GM12878 (cell line): ENCODE measurements at regions of chr6 and their contacts with region 1.

Region 1: GRCh38 chr6:132483779-132484679 is 28.9 kb downstream of the STX7 start:
- DNase-seq: peak; percentile 37
- ATAC-seq: peak; percentile 93
- H3K4me3 ChIP-seq: no peak overlapping the region
- H3K27ac ChIP-seq: no peak overlapping the region
- H3K4me1 ChIP-seq: peaks cover 31% of the 10 kb centered on the region
- H3K27me3 ChIP-seq: no peaks in the 10 kb centered on the region
- CTCF ChIP-seq: peak; percentile 47 to 74 (median 60); a peak in 5 of 6 replicates
- EP300 ChIP-seq: no peak
- POLR2A ChIP-seq: no peak
- RAD21 ChIP-seq: peak; percentile 92

Region 2: GRCh38 chr6:131909408-131910218 is 574.4 kb before region 1 on chr6:
- CTCF ChIA-PET with region 1: no interaction called
- POLR2A ChIA-PET with region 1: no interaction called
- RAD21 ChIA-PET with region 1: no interaction called
- SMC1A ChIA-PET with region 1: no interaction called
- in situ Hi-C with region 1: no loop called
- intact Hi-C with region 1: loop called (anchors 10 kb)
- DNase-seq: no peak
- ATAC-seq: peak; percentile 94
- H3K4me3 ChIP-seq: no peak overlapping the region
- H3K27ac ChIP-seq: no peak overlapping the region
- H3K4me1 ChIP-seq: no peaks in the 10 kb centered on the region
- H3K27me3 ChIP-seq: no peaks in the 10 kb centered on the region
- CTCF ChIP-seq: peak; percentile 75 to 80 (median 77)
- EP300 ChIP-seq: no peak
- POLR2A ChIP-seq: no peak
- RAD21 ChIP-seq: peak; percentile 65

Region 3: GRCh38 chr6:132270726-132271402 is 213.2 kb before region 1 on chr6:
- CTCF ChIA-PET with region 1: interaction called, 263 read pairs
- POLR2A ChIA-PET with region 1: no interaction called
- RAD21 ChIA-PET with region 1: interaction called, 5 read pairs
- SMC1A ChIA-PET with region 1: interaction called, 6 read pairs
- in situ Hi-C with region 1: loop called (anchors 5 kb)
- intact Hi-C with region 1: no loop called
- DNase-seq: no peak
- ATAC-seq: no peak
- H3K4me3 ChIP-seq: no peak overlapping the region
- H3K27ac ChIP-seq: no peak overlapping the region
- H3K4me1 ChIP-seq: peaks cover 10% of the 10 kb centered on the region
- H3K27me3 ChIP-seq: no peaks in the 10 kb centered on the region; a peak in 2 of 4 replicates
- CTCF ChIP-seq: no peak
- EP300 ChIP-seq: no peak
- POLR2A ChIP-seq: no peak
- RAD21 ChIP-seq: no peak

Region 4: DNA sequence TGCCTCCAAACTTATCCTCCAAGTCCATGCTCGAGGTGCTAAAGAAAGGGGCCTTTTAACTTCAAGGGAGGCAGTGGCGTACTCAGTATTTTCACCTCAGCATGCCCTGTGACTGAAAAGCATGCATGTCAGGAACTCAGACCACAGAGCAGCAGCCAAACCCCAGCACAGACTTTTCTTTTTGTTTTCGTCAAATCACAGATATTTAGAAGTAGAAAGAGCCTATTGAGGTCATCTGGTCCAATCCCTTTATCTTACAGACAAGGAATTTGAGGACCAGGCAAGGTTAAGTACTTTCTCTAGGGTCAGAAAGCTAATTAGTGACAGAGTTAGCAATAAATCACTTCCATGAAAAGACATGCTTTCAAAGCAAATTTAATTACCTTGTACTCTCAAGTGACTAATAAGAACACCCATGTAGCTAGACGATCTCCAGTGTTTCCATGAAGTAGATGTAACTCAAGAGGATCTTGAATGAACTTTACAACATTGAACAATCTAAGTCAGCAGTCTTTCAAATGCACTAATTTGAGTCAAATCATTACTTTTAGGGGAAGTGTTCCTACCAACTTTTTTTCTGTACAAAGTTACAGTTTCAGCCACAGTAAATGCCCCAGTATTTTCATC is 118.6 kb before region 1 on chr6:
- CTCF ChIA-PET with region 1: interaction called, 3 read pairs
- POLR2A ChIA-PET with region 1: no interaction called
- RAD21 ChIA-PET with region 1: no interaction called
- SMC1A ChIA-PET with region 1: interaction called, 3 read pairs
- in situ Hi-C with region 1: no loop called
- intact Hi-C with region 1: loop called (anchors 5 kb)
- DNase-seq: peak; percentile 81
- ATAC-seq: peak; percentile 96
- H3K4me3 ChIP-seq: no peak overlapping the region
- H3K27ac ChIP-seq: 0 out of 2 replicates have a peak overlapping the region, but pooled peaks have one; percentile 35
- H3K4me1 ChIP-seq: peaks cover 17% of the 10 kb centered on the region; the same call in 1 of the 2 replicates
- H3K27me3 ChIP-seq: peaks cover 0 to 3% of the 10 kb centered on the region in 2 experiments; a peak in 2 of 4 replicates
- CTCF ChIP-seq: no peak
- EP300 ChIP-seq: peak; percentile 96 to 99
- POLR2A ChIP-seq: no peak
- RAD21 ChIP-seq: no peak

Region 5: GRCh38 chr6:132465530-132466485 is 18.2 kb before region 1 on chr6:
- CTCF ChIA-PET with region 1: interaction called, 60 read pairs
- POLR2A ChIA-PET with region 1: interaction called, 3 read pairs
- RAD21 ChIA-PET with region 1: interaction called, 8 read pairs
- SMC1A ChIA-PET with region 1: interaction called, 12 read pairs
- in situ Hi-C with region 1: no loop called
- intact Hi-C with region 1: no loop called
- DNase-seq: no peak
- ATAC-seq: peak; percentile 94
- H3K4me3 ChIP-seq: no peak overlapping the region
- H3K27ac ChIP-seq: peak overlapping the region; percentile 40; the same call in 1 of the 2 replicates
- H3K4me1 ChIP-seq: peaks cover 16% of the 10 kb centered on the region
- H3K27me3 ChIP-seq: no peaks in the 10 kb centered on the region
- CTCF ChIP-seq: no peak
- EP300 ChIP-seq: peak in 1 of 2 experiments; percentile 40; a peak in 1 of 4 replicates
- POLR2A ChIP-seq: no peak
- RAD21 ChIP-seq: no peak

Region 6: GRCh38 chr6:132498638-132499037 is 14.6 kb after region 1 on chr6:
- CTCF ChIA-PET with region 1: interaction called, 43 read pairs
- POLR2A ChIA-PET with region 1: interaction called, 6 read pairs
- RAD21 ChIA-PET with region 1: interaction called, 15 read pairs
- SMC1A ChIA-PET with region 1: interaction called, 24 read pairs
- in situ Hi-C with region 1: no loop called
- intact Hi-C with region 1: no loop called
- DNase-seq: peak; percentile 60
- ATAC-seq: peak; percentile 75
- H3K4me3 ChIP-seq: peak overlapping the region; percentile 22; the same call in 1 of the 2 replicates
- H3K27ac ChIP-seq: peak overlapping the region; percentile 76
- H3K4me1 ChIP-seq: peaks cover 53% of the 10 kb centered on the region
- H3K27me3 ChIP-seq: no peaks in the 10 kb centered on the region
- CTCF ChIP-seq: no peak
- EP300 ChIP-seq: peak; percentile 87 to 97
- POLR2A ChIP-seq: no peak
- RAD21 ChIP-seq: no peak

Region 7: DNA sequence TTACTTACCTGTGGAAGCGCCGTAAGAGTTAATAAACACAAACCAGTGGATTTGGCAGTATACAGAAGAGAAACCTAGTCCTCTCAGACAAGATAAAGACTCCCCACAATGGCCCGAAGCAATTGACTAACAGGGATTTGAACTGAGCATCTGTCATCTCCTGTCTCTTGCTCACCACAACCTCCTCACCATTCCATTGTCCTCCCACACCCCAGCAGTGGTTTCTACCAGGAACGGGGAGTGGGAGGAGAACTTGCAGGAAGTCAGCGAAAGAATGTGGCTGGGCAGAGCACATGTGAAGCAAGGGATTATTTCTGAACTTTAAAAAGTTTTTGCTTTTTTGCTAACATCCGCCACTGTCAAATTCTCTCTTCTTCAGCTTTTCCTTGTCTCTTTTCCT is 199.5 kb after region 1 on chr6:
- CTCF ChIA-PET with region 1: no interaction called
- POLR2A ChIA-PET with region 1: no interaction called
- RAD21 ChIA-PET with region 1: no interaction called
- SMC1A ChIA-PET with region 1: no interaction called
- in situ Hi-C with region 1: no loop called
- intact Hi-C with region 1: no loop called
- DNase-seq: no peak
- ATAC-seq: no peak
- H3K4me3 ChIP-seq: no peak overlapping the region
- H3K27ac ChIP-seq: no peak overlapping the region
- H3K4me1 ChIP-seq: no peaks in the 10 kb centered on the region
- H3K27me3 ChIP-seq: no peaks in the 10 kb centered on the region
- CTCF ChIP-seq: no peak
- EP300 ChIP-seq: no peak
- POLR2A ChIP-seq: no peak
- RAD21 ChIP-seq: no peak